IMR-90 (cell line): ENCODE measurements at regions of chr3 and their contacts with region 1.

Region 1: GRCh38 chr3:195956571-195956970 is 48.2 kb upstream of the TNK2 start:
- DNase-seq: no peak
- ATAC-seq: no peak
- H3K4me3 ChIP-seq: no peak overlapping the region
- H3K27ac ChIP-seq: no peak overlapping the region
- H3K4me1 ChIP-seq: no peaks in the 10 kb centered on the region
- H3K27me3 ChIP-seq: no peaks in the 10 kb centered on the region
- CTCF ChIP-seq: no peak
- POLR2A ChIP-seq: no peak
- RAD21 ChIP-seq: no peak

Region 2: DNA sequence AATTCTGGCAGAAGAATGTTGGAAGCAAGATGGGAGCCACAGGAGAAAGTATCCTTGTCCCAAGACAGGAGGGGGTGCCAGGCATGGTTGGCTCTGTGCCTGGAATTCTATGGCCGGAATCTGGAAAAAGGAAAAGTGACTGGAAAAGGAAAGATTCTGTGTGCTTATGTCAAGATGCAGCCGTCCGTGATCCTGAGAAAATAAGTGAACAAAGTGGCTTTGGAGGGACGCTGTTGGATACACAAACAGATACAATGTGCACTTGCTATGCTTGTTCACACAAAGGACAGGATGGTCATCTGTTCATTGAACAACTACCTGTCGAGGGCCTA is 264.3 kb before region 1 on chr3:
- CTCF ChIA-PET with region 1: no interaction called
- POLR2A ChIA-PET with region 1: no interaction called
- dilution Hi-C with region 1: no loop called
- in situ Hi-C with region 1: loop called (anchors 25 kb)
- intact Hi-C with region 1: loop called (anchors 10 kb)
- DNase-seq: no peak
- ATAC-seq: no peak
- H3K4me3 ChIP-seq: no peak overlapping the region
- H3K27ac ChIP-seq: no peak overlapping the region
- H3K4me1 ChIP-seq: peaks cover 9% of the 10 kb centered on the region
- H3K27me3 ChIP-seq: no peaks in the 10 kb centered on the region
- CTCF ChIP-seq: no peak
- POLR2A ChIP-seq: no peak
- RAD21 ChIP-seq: no peak

Region 3: DNA sequence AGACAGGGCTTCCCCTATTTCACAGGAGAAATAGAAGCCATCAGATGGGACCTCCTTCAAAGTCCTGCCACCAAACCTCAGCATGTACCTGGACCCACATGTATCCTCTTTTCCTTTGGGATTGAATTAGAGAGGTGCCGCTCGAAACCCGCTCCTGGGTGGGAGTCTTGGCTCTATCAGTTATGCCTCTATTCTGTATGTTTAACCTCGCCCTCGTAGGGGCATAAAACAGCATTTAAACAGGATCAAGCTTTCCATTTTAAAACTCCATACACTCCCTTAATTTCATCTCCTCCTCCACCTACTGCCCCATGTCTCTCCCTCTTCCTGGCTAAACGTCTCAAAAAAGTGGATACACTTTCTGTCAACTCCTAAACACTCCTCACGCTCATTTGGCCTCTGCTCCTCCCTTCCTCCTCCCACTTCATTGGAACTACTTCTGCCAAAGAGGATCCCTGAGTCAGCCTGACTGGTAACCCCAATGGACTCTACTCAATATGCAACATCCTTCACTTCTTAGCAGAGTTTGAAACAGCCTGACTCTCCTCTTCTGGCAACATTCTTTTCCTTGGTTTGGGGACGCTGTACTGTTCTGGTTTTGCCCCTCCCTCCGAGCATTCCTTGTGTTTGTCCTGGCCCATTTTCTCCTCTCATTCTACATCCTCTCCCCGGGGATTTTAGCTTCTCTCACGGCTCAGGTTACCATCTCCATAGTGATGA is 258.8 kb before region 1 on chr3:
- CTCF ChIA-PET with region 1: no interaction called
- POLR2A ChIA-PET with region 1: no interaction called
- dilution Hi-C with region 1: no loop called
- in situ Hi-C with region 1: loop called (anchors 25 kb)
- intact Hi-C with region 1: no loop called
- DNase-seq: peak; percentile 88
- ATAC-seq: peak; percentile 86
- H3K4me3 ChIP-seq: no peak overlapping the region
- H3K27ac ChIP-seq: peak overlapping the region; percentile 3; the same call in 1 of the 2 replicates
- H3K4me1 ChIP-seq: peaks cover 11% of the 10 kb centered on the region
- H3K27me3 ChIP-seq: no peaks in the 10 kb centered on the region
- CTCF ChIP-seq: no peak
- POLR2A ChIP-seq: no peak
- RAD21 ChIP-seq: 0 out of 2 replicates have a peak, but pooled peaks have one; percentile 6

Region 4: GRCh38 chr3:195829897-195830254 is 126.7 kb before region 1 on chr3:
- CTCF ChIA-PET with region 1: no interaction called
- POLR2A ChIA-PET with region 1: no interaction called
- dilution Hi-C with region 1: no loop called
- in situ Hi-C with region 1: no loop called
- intact Hi-C with region 1: no loop called
- DNase-seq: no peak
- ATAC-seq: no peak
- H3K4me3 ChIP-seq: no peak overlapping the region
- H3K27ac ChIP-seq: no peak overlapping the region
- H3K4me1 ChIP-seq: no peaks in the 10 kb centered on the region
- H3K27me3 ChIP-seq: peaks cover 28% of the 10 kb centered on the region
- CTCF ChIP-seq: no peak
- POLR2A ChIP-seq: no peak
- RAD21 ChIP-seq: no peak

Region 5: DNA sequence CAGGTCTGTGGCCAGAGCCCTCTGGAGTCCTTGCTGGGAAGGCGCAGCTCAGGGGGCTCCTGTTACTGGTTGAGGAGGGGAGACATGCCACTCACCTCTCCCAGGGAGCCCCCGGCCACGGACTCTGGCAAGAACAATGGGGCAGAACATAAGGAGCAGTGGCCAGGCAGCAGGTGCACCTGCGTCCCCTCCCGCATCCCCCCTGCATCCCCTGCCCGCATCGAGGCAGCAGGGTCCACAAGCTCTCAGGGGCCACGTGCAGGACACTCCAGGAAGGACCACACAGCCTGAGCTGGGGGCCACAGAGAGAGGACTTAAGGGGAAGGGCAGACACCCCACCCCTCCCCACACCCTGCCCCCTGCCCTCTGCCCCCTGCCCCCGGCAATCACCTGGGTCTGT is 52.4 kb after region 1 on chr3:
- CTCF ChIA-PET with region 1: no interaction called
- POLR2A ChIA-PET with region 1: no interaction called
- dilution Hi-C with region 1: no loop called
- in situ Hi-C with region 1: no loop called
- intact Hi-C with region 1: no loop called
- DNase-seq: no peak
- ATAC-seq: no peak
- H3K4me3 ChIP-seq: no peak overlapping the region
- H3K27ac ChIP-seq: no peak overlapping the region
- H3K4me1 ChIP-seq: no peaks in the 10 kb centered on the region
- H3K27me3 ChIP-seq: peaks cover 33% of the 10 kb centered on the region
- CTCF ChIP-seq: no peak
- POLR2A ChIP-seq: no peak
- RAD21 ChIP-seq: no peak

Region 6: GRCh38 chr3:196115678-196116083 is 159.1 kb after region 1 on chr3:
- CTCF ChIA-PET with region 1: no interaction called
- POLR2A ChIA-PET with region 1: no interaction called
- dilution Hi-C with region 1: no loop called
- in situ Hi-C with region 1: no loop called
- intact Hi-C with region 1: no loop called
- DNase-seq: no peak
- ATAC-seq: no peak
- H3K4me3 ChIP-seq: no peak overlapping the region
- H3K27ac ChIP-seq: no peak overlapping the region
- H3K4me1 ChIP-seq: no peaks in the 10 kb centered on the region
- H3K27me3 ChIP-seq: peaks cover 20% of the 10 kb centered on the region
- CTCF ChIP-seq: no peak
- POLR2A ChIP-seq: no peak
- RAD21 ChIP-seq: no peak